ENCODE measurements at regions of chr6 and their contacts with region 1.

Region 1: DNA sequence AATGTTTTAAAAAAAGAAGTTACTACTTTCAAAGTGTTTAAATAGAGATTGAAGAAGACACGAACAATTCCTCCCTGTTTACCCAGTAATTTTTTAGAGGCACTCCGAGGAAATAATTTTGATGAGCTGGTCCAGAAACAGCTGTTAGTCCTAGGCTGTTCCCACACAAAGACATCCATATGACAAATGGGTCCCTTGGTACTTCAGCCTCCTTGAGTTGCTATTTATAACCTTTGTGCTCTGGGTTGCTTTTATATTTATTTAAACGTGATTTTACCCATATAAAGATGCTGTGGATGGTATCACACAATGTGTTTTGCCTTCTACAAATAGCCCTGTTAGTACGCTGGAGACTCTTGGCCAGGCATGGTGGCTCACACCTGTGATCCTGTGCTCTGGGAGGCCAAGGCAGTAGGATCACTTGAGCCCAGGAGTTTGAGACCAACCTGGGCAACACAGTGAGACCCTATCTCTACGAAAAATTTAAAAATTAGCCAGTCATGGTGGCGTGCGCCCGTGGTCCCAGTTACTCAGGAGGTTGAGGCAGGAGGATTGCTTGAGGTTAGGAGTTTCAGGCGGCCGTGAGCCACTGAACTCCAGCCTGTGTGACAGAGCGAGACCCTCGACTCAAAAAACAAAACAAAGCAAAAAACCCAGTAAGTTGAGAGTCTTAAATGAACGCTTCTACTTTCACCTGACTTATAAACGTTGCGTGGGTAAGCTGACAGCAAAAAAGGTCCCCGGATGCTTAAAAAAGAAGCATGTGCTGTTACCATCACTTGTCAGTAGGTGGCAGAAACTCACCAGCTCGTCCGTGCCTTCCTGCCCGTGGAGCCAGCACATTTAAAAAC is 56.9 kb upstream of the ARMH2 start:
- DNase-seq: peak; percentile 38 to 83 (median 72)
- ATAC-seq: peak; percentile 39 to 67
- H3K4me3 Mint-ChIP-seq: peak overlapping the region; percentile 31 to 84 (median 72)
- H3K27ac Mint-ChIP-seq: peak overlapping the region; percentile 88 to 98 (median 94)
- H3K4me1 Mint-ChIP-seq: peaks cover 31 to 58% (median 53%) of the 10 kb centered on the region in 4 donors
- H3K27me3 Mint-ChIP-seq: no peaks in the 10 kb centered on the region

Region 2: GRCh38 chr6:24867104-24867703 is 11.6 kb after region 1 on chr6:
- POLR2A ChIA-PET with region 1: interaction called, 13 read pairs
- DNase-seq: no peak
- ATAC-seq: peak in 1 of 2 donors; percentile 17
- H3K4me3 Mint-ChIP-seq: peak overlapping the region in 5 of 10 donors; percentile 33 to 67 (median 48)
- H3K27ac Mint-ChIP-seq: peak overlapping the region; percentile 67 to 98 (median 90)
- H3K4me1 Mint-ChIP-seq: peaks cover 26 to 85% (median 68%) of the 10 kb centered on the region in 4 donors
- H3K27me3 Mint-ChIP-seq: no peaks in the 10 kb centered on the region

Region 3: GRCh38 chr6:24910961-24911712 is 55.5 kb after region 1 on chr6:
- POLR2A ChIA-PET with region 1: interaction called, 47 read pairs
- DNase-seq: peak in 5 of 10 donors; percentile 39 to 70 (median 56)
- ATAC-seq: peak; percentile 39 to 45
- H3K4me3 Mint-ChIP-seq: peak overlapping the region; percentile 81 to 99 (median 94)
- H3K27ac Mint-ChIP-seq: peak overlapping the region; percentile 96 to 99 (median 98)
- H3K4me1 Mint-ChIP-seq: peaks cover 75 to 100% (median 98%) of the 10 kb centered on the region in 4 donors
- H3K27me3 Mint-ChIP-seq: no peaks in the 10 kb centered on the region

Region 4: DNA sequence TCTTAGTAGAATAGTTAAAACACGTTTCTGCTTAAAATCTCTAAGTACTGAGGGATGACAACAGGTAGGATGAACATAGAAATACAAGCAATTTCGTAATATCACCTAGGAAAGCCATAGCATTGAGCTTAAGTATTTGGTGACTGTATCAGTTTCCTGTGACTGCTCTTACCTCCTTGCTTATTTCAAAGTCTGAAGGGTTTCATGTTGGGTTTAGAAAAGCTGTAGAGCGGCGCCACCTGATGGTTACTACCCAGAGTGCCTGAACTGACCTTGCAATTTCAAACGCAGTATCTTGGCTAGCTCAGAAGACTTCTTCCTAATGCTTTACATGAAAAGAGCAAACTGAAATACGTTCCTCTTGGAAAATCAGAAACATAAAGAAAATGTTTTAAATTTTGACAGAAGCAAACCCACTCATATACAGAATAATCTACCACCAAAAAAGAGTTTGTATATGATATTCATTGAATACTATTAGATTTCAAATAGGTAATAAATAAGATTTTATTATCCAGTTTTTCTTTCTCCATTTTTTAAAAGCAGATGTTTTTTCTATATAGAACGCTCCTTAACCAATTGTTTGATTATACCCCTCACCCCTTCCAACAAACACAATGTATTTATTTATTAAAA is 162.4 kb after region 1 on chr6:
- POLR2A ChIA-PET with region 1: interaction called, 51 read pairs
- DNase-seq: peak; percentile 59 to 92 (median 78)
- ATAC-seq: peak; percentile 72 to 74
- H3K4me3 Mint-ChIP-seq: peak overlapping the region in 7 of 10 donors; percentile 23 to 72 (median 46)
- H3K27ac Mint-ChIP-seq: peak overlapping the region; percentile 84 to 96 (median 91)
- H3K4me1 Mint-ChIP-seq: peaks cover 17 to 43% (median 35%) of the 10 kb centered on the region in 4 donors
- H3K27me3 Mint-ChIP-seq: no peaks in the 10 kb centered on the region